ENCODE measurements at regions of chr4 and their contacts with region 1.

Region 1: DNA sequence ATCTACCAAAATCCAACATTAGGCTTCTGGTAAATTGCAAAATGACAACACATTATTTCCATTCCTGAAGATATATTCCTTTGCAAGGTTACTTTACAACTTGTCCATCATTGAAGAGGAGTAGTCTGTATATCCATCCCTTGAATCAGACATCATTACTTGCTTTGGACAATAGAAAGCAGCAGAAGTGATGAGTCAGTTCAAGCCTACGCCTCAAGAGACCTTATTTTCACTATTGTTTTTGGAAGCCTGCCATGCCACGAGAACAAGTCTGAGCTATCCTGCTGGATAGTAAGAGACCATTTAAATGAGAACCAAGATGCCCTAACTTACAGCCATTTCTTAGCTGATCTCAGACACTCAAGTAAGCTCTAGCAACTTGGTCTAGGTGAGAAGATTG is 246.0 kb upstream of the HHIP start:
- DNase-seq: peak; percentile 46 to 49
- H3K4me3 ChIP-seq: no peak overlapping the region
- H3K27ac ChIP-seq: no peak overlapping the region
- H3K4me1 ChIP-seq: no peaks in the 10 kb centered on the region
- H3K27me3 ChIP-seq: no peaks in the 10 kb centered on the region
- CTCF ChIP-seq: no peak

Region 2: DNA sequence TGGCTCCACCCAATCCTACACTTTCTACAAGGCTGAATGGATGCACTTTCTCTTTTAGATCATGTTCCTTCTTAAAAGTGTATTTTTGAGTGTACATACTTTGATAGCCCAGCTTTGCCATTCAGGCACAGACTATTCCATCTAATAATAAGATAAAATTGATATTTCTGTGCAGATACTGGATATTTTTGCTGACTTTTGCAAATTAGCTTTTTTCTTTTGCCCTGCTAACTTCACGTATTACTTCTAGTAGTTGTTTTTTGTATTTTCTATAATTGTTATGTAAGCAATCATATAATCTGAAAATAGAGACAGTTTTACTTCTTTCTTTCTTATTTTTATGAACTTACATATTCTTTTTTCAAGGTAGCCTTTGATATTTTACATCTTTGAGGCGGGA is 245.9 kb before region 1 on chr4:
- CTCF ChIA-PET with region 1: no interaction called
- POLR2A ChIA-PET with region 1: interaction called, 11 read pairs
- intact Hi-C with region 1: no loop called
- DNase-seq: no peak
- H3K4me3 ChIP-seq: no peak overlapping the region
- H3K27ac ChIP-seq: no peak overlapping the region
- H3K4me1 ChIP-seq: no peaks in the 10 kb centered on the region
- H3K27me3 ChIP-seq: no peaks in the 10 kb centered on the region
- CTCF ChIP-seq: no peak

Region 3: GRCh38 chr4:144634978-144635747 is 235.2 kb after region 1 on chr4:
- CTCF ChIA-PET with region 1: no interaction called
- POLR2A ChIA-PET with region 1: no interaction called
- intact Hi-C with region 1: no loop called
- DNase-seq: no peak
- H3K4me3 ChIP-seq: no peak overlapping the region
- H3K27ac ChIP-seq: no peak overlapping the region
- H3K4me1 ChIP-seq: no peaks in the 10 kb centered on the region
- H3K27me3 ChIP-seq: no peaks in the 10 kb centered on the region
- CTCF ChIP-seq: no peak